ENCODE measurements at regions of chr10 and their contacts with region 1.

Region 1: DNA sequence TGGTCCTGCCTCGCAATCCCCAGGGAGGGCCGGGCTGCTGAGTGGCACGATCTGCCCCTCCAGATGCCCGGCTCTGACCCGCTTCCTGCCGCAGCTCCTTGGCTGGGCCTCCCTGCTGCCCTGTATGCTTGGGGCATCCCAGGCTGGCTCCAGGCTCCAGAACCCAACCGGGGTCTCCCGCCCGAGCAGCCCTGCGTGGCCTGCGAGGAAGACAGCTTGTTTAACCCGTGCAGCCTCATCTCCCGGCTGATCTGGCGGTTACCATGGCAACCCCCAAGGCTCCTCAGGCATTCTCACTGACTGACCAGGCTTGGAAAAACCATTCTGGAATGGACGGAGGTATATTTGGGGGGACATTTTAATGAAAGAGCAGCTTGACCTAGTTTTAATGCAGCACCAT is 232.4 kb upstream of the MYO3A start:
- DNase-seq: no peak
- ATAC-seq: no peak
- H3K4me3 ChIP-seq: no peak overlapping the region
- H3K27ac ChIP-seq: no peak overlapping the region
- H3K4me1 ChIP-seq: no peaks in the 10 kb centered on the region
- CTCF ChIP-seq: no peak
- EP300 ChIP-seq: no peak
- POLR2A ChIP-seq: no peak
- RAD21 ChIP-seq: no peak

Region 2: DNA sequence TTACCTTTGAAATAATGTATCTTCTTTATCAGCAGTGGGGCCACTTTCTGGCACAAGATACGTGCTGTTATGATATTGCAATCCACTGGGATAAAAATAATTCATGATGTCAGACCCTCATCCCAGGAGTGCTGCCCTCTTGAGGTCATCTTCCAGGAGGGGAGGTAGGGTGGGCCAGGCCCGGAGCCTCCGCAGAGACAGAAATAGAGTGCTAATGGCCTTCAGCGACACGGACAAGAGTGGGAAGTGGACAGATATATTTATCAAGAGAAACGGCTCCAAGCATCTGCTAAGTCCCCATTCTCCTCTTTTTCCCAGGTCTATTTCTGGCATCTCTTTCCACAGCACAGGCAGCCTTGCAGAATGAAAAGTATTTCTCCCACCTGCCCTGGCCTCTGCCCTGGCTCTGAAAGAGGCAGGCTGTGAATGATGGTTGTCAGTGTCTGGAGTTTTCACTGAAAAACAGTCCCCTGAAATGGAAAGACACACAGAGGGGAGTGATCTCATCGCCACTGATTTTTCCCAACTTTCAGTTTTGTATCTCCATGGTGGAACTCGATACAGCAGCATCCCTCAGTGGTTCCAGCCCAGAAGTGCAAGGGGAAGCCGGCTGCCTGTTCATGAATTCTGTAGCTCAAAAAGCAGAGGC is 19.3 kb before region 1 on chr10:
- CTCF ChIA-PET with region 1: interaction called, 17 read pairs
- POLR2A ChIA-PET with region 1: no interaction called
- DNase-seq: peak; percentile 21 to 23
- ATAC-seq: peak; percentile 89 to 90
- H3K4me3 ChIP-seq: 0 out of 3 replicates have a peak overlapping the region, but pooled peaks have one; percentile 18
- H3K27ac ChIP-seq: 0 out of 6 replicates have a peak overlapping the region, but pooled peaks of 1 of the 2 experiments have one; percentile 16
- H3K4me1 ChIP-seq: no peaks in the 10 kb centered on the region
- CTCF ChIP-seq: peak; percentile 34
- EP300 ChIP-seq: no peak
- POLR2A ChIP-seq: no peak
- RAD21 ChIP-seq: peak; percentile 64 to 66

Region 3: DNA sequence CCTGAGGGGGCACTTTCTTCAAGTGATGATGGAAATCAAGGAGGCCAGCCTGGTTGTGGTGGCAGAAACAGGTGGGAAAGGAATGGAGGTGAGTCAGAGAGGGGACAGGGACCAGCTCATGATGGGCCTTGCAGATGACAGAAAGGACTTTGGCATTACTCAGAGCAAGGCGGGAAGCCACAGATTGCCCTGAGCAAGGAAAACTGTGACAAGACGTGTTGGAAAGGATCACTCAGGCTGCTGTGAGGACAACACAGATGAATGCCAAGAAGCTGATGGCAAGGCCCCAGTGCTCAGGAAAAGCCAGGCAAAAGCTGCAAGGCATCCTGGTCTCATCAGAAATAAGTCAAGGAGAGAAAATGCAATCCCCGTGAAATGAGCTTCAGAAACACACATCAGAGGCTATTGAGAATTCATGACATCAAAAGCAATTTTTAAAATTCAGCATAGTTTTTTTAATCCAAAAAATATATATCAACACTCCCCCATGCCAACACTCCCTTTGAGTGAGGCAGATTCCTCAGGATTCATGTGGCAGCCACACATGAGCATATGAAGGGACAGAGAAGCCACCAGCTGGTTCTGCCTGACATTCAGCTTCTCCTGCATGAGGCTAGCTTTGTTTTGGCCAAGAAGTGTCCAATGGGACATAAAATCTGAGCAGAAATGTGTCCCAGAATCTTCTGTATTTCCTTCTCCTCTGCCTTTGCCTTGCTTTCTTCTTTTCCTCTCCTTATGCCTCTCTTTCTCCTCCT is 12.1 kb before region 1 on chr10:
- CTCF ChIA-PET with region 1: interaction called, 33 read pairs
- POLR2A ChIA-PET with region 1: no interaction called
- DNase-seq: no peak
- ATAC-seq: no peak
- H3K4me3 ChIP-seq: no peak overlapping the region
- H3K27ac ChIP-seq: no peak overlapping the region
- H3K4me1 ChIP-seq: no peaks in the 10 kb centered on the region
- CTCF ChIP-seq: no peak
- EP300 ChIP-seq: no peak
- POLR2A ChIP-seq: no peak
- RAD21 ChIP-seq: no peak

Region 4: GRCh38 chr10:25713894-25714240 is 12.2 kb after region 1 on chr10:
- CTCF ChIA-PET with region 1: interaction called, 31 read pairs
- POLR2A ChIA-PET with region 1: no interaction called
- DNase-seq: no peak
- ATAC-seq: no peak
- H3K4me3 ChIP-seq: no peak overlapping the region
- H3K27ac ChIP-seq: no peak overlapping the region
- H3K4me1 ChIP-seq: no peaks in the 10 kb centered on the region
- CTCF ChIP-seq: no peak
- EP300 ChIP-seq: no peak
- POLR2A ChIP-seq: no peak
- RAD21 ChIP-seq: no peak

Measured in A549 (cell line).